Heart left ventricle (tissue), 16 donors: ENCODE measurements at regions of chr18 and their contacts with region 1.

Region 1: GRCh38 chr18:35040988-35041814 is at the start of gene MAPRE2:
- DNase-seq: peak; percentile 99 to 100 (median 99)
- ATAC-seq: peak; percentile 93 to 97 (median 96)
- H3K4me3 ChIP-seq: peak within 1 kb of the TSS; percentile 66 to 96 (median 92)
- H3K27ac ChIP-seq: peak within 1 kb of the TSS; percentile 75 to 95 (median 89)
- H3K4me1 ChIP-seq: peaks cover 0 to 77% (median 37%) of the 10 kb centered on the region in 12 donors
- H3K27me3 ChIP-seq: no peaks in the 10 kb centered on the region
- CTCF ChIP-seq: peak in 2 of 12 donors; percentile 9 to 10
- POLR2A ChIP-seq: peak; percentile 92 to 98
- total RNA-seq, gene MAPRE2: 80.2 to 190 (median 137) TPM

Region 2: GRCh38 chr18:35076135-35076924 is 35.1 kb after region 1 on chr18:
- intact Hi-C with region 1: loop called in 1 of 10 experiments (anchors 5 kb)
- DNase-seq: no peak
- ATAC-seq: no peak
- H3K4me3 ChIP-seq: no peak overlapping the region
- H3K27ac ChIP-seq: peak overlapping the region in 11 of 12 donors; percentile 37 to 84 (median 71)
- H3K4me1 ChIP-seq: peaks cover 4 to 97% (median 71%) of the 10 kb centered on the region in 12 donors
- H3K27me3 ChIP-seq: no peaks in the 10 kb centered on the region
- CTCF ChIP-seq: no peak
- POLR2A ChIP-seq: no peak

Region 3: DNA sequence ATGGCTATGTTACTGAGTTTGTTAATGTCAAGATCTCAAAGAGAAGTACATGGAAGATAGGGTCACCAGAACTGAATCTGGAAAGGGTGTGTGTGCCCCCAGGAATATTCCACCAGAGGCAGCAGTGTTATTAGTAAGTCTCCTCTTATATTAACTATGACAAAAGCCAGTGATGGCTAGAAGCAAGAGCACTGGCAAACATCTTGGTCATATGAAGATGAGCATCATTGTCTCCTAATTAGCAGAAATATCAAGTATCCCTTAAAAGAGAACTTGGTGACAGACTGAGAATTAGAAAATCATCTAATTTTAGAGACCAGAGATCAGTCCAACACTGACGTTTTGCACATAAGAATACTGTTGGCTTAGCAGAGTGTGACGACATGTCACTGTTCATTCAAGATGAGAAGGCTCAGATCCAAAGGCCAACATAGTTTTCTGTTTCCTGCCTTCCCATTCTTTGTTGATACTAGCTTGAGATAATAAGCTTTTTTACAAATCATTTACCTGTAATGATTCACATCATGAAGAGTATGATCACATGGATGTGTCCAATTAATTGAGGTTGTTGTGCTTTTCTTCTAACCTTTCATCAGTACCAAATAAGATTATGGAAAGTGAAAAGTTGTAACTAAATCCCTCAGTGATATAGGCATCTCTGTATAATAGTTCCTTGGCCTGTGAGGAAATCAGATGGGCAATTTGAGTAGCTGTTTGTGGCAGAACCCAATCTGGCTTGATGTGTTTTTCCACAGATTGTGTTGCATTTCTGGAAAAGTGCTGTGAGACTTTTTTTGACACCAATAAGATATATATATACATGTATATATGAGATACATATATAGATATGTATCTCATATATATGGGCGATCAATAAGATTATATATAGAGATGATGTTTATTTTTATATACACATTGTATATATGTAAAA is 44.5 kb after region 1 on chr18:
- intact Hi-C with region 1: loop called in 3 of 10 experiments (anchors 5 kb)
- DNase-seq: no peak
- ATAC-seq: peak; percentile 65 to 77 (median 70)
- H3K4me3 ChIP-seq: no peak overlapping the region
- H3K27ac ChIP-seq: peak overlapping the region; percentile 13 to 94 (median 78)
- H3K4me1 ChIP-seq: peaks cover 4 to 85% (median 51%) of the 10 kb centered on the region in 12 donors
- H3K27me3 ChIP-seq: no peaks in the 10 kb centered on the region
- CTCF ChIP-seq: no peak
- POLR2A ChIP-seq: no peak

Region 4: DNA sequence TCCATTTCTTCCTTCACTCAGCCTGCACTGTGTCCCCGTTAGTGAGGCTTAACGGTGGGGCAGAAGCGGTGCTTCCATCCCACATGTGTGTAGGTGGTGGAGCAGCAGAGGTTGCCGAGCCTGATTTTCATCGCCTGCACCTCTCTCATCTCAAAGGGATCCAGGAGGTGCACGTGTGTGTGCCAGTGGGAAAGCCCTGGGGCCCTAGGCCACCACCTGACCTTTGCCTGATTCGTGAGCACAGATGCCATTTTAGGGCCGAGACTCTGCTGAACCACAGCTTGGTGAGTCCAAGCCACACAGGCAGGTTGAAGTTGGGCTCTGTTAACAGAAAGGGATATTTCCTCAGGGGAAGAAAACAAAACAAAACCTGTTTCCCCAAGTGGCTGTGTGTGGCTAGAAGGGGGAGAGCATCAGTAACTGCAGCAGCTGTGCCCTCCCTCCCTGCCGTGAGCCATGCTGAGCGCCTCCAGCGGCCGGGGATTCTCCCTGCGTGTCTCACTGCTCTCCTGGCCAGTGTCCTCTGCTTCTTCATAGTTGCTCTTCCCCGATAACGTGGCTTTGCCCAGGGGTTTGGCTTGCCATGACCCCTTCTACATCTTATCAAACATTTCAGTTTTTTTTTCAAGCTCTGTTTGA is 81.5 kb after region 1 on chr18:
- intact Hi-C with region 1: loop called in 3 of 10 experiments (anchors 5 kb)
- DNase-seq: peak in 3 of 5 donors; percentile 31 to 68 (median 51)
- ATAC-seq: peak in 3 of 4 donors; percentile 64 to 66 (median 66)
- H3K4me3 ChIP-seq: no peak overlapping the region
- H3K27ac ChIP-seq: peak overlapping the region in 6 of 12 donors; percentile 1 to 35 (median 12)
- H3K4me1 ChIP-seq: peaks cover 3 to 77% (median 47%) of the 10 kb centered on the region in 12 donors
- H3K27me3 ChIP-seq: no peaks in the 10 kb centered on the region
- CTCF ChIP-seq: peak in 8 of 12 donors; percentile 11 to 52 (median 30)
- POLR2A ChIP-seq: no peak